CD8-positive, alpha-beta memory T cell (primary cell): ENCODE measurements at regions of chr19 and their contacts with region 1.

Region 1: DNA sequence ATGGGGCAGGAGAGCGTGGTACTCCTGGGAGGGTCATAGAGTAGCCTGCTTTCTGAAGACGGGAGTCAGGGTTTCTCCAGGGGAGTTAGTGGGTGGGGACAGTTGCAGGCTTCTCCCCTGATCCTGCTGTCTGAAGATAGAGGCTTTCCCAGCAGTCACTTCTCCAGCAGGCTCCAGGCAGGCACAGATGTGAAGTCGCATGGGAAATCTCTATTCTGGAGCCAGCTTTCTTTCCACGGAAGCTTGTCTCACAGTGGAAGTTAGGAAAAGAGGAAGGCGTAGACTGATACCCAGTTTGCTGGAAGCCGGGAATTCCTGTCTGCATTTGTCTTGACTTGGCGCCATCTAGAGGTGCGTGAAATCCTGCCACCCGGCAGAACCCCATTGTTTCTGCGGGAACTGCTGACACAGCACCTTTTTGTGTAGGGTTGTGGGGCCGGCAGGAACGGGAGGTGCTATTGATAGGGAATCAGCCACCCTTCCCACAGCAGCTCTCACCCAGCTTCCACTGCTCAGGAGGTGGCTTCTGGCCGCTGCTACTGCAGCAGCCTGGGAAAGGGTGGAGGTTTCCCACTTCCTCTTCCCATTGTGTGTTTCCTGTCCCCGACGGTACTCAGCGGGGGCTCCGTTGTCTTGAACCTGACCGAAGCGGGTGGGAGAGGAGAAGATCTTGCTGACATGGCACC is 28.5 kb upstream of the NPAS1 start:
- DNase-seq: peak; percentile 30 to 75 (median 46)
- H3K4me3 ChIP-seq: no peak overlapping the region
- H3K4me3 Mint-ChIP-seq: peak overlapping the region in 3 of 7 donors; percentile 19 to 56 (median 38)
- H3K27ac ChIP-seq: no peak overlapping the region
- H3K27ac Mint-ChIP-seq: peak overlapping the region in 6 of 8 donors; percentile 1 to 82 (median 67)
- H3K4me1 ChIP-seq: peaks cover 9% of the 10 kb centered on the region
- H3K4me1 Mint-ChIP-seq: peaks cover 23 to 27% (median 26%) of the 10 kb centered on the region in 3 donors
- H3K27me3 ChIP-seq: no peaks in the 10 kb centered on the region
- H3K27me3 Mint-ChIP-seq: no peaks in the 10 kb centered on the region

Region 2: DNA sequence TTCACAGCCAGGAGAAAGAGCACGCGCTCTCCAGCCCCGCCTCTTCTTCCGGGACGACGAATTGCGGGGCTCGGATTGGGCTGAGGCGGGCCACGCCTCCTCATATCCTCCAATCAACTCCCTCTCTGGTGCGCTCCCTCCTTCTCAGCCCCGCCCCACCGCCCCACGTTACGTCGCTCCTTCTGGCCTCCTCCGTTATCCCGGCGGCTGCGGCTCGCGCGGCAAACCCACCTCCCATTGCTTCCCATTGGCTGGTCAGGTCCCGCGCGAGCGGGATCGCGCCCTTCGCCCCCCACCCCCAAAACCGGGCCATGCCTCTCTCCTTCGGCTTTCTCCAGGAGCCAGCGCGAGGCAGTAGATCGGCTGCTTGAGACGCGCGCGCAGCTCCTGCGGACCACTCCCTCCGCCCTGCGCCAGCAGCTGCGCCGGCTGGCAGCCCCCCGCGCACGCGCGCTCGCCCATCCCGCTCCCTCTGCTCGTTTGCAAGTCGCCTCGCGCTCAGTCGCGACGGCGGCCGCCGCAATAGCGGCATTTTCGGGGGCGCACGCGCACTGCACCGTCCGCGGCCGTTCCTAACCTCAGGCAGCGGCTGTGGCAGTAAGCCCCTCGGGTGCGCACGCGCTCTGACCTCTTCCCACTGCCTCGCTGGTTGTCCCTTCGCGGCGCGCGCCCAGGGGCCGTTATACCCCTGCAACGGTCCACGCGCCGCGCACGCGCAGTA is 130.8 kb before region 1 on chr19:
- CTCF ChIA-PET with region 1: interaction called, 50 read pairs
- POLR2A ChIA-PET with region 1: no interaction called
- DNase-seq: peak; percentile 92 to 96 (median 94)
- H3K4me3 ChIP-seq: peak overlapping the region; percentile 75
- H3K4me3 Mint-ChIP-seq: peak overlapping the region; percentile 90 to 99 (median 95)
- H3K27ac ChIP-seq: peak overlapping the region; percentile 79
- H3K27ac Mint-ChIP-seq: peak overlapping the region; percentile 87 to 98 (median 96)
- H3K4me1 ChIP-seq: peaks cover 47% of the 10 kb centered on the region
- H3K4me1 Mint-ChIP-seq: peaks cover 17 to 21% (median 19%) of the 10 kb centered on the region in 3 donors
- H3K27me3 ChIP-seq: no peaks in the 10 kb centered on the region
- H3K27me3 Mint-ChIP-seq: peaks cover 0 to 2% of the 10 kb centered on the region in 2 donors

Region 3: GRCh38 chr19:46925548-46925950 is 65.6 kb before region 1 on chr19:
- CTCF ChIA-PET with region 1: interaction called, 14 read pairs
- POLR2A ChIA-PET with region 1: interaction called, 3 read pairs
- DNase-seq: no peak
- H3K4me3 ChIP-seq: no peak overlapping the region
- H3K4me3 Mint-ChIP-seq: peak overlapping the region in 1 of 7 donors; percentile 34
- H3K27ac ChIP-seq: no peak overlapping the region
- H3K27ac Mint-ChIP-seq: peak overlapping the region in 7 of 8 donors; percentile 19 to 81 (median 68)
- H3K4me1 ChIP-seq: peaks cover 35% of the 10 kb centered on the region
- H3K4me1 Mint-ChIP-seq: peaks cover 63 to 82% (median 71%) of the 10 kb centered on the region in 3 donors
- H3K27me3 ChIP-seq: no peaks in the 10 kb centered on the region
- H3K27me3 Mint-ChIP-seq: no peaks in the 10 kb centered on the region

Region 4: GRCh38 chr19:46975925-46976782 is 15.0 kb before region 1 on chr19:
- CTCF ChIA-PET with region 1: interaction called, 10 read pairs
- POLR2A ChIA-PET with region 1: no interaction called
- DNase-seq: no peak
- H3K4me3 ChIP-seq: no peak overlapping the region
- H3K4me3 Mint-ChIP-seq: no peak overlapping the region
- H3K27ac ChIP-seq: no peak overlapping the region
- H3K27ac Mint-ChIP-seq: peak overlapping the region in 7 of 8 donors; percentile 38 to 69 (median 47)
- H3K4me1 ChIP-seq: peaks cover 38% of the 10 kb centered on the region
- H3K4me1 Mint-ChIP-seq: peaks cover 51 to 67% (median 62%) of the 10 kb centered on the region in 3 donors
- H3K27me3 ChIP-seq: no peaks in the 10 kb centered on the region
- H3K27me3 Mint-ChIP-seq: peaks cover 0 to 3% of the 10 kb centered on the region in 2 donors

Region 5: DNA sequence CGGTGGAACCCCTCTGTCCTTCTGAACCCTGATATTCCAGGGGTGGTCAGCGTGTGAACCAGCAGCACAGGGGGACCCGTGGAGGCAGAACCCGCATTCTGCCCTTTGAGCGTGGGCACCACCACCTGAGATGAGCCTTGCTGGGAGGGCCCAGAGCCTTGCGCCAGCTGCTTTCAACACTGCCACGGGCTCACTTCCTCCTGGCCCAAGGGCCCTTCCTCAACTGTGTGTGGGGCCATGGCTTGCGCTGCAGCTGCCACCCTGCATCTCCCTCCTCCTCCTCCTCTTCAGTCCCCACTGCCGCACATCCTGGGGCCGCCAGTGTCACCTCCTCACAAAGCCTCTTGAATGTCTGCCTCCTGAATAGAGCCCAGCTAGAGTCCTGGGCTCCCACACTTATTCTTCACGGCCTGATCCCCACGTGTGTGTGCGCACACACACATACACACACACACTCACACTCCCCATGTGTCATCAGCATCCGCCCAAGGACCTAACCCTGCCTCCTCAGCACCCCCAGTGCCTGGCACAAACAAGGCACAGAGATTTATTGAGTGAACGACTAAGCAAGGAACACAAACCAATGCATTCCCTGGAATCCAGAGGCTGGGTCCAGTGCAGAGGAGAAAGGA is 84.2 kb after region 1 on chr19:
- CTCF ChIA-PET with region 1: no interaction called
- POLR2A ChIA-PET with region 1: no interaction called
- DNase-seq: no peak
- H3K4me3 ChIP-seq: no peak overlapping the region
- H3K4me3 Mint-ChIP-seq: no peak overlapping the region
- H3K27ac ChIP-seq: no peak overlapping the region
- H3K27ac Mint-ChIP-seq: peak overlapping the region in 4 of 8 donors; percentile 7 to 67 (median 36)
- H3K4me1 ChIP-seq: no peaks in the 10 kb centered on the region
- H3K4me1 Mint-ChIP-seq: peaks cover 0 to 10% (median 6%) of the 10 kb centered on the region in 3 donors
- H3K27me3 ChIP-seq: no peaks in the 10 kb centered on the region
- H3K27me3 Mint-ChIP-seq: no peaks in the 10 kb centered on the region